ENCODE measurements at regions of chr11 and their contacts with region 1.

Region 1: DNA sequence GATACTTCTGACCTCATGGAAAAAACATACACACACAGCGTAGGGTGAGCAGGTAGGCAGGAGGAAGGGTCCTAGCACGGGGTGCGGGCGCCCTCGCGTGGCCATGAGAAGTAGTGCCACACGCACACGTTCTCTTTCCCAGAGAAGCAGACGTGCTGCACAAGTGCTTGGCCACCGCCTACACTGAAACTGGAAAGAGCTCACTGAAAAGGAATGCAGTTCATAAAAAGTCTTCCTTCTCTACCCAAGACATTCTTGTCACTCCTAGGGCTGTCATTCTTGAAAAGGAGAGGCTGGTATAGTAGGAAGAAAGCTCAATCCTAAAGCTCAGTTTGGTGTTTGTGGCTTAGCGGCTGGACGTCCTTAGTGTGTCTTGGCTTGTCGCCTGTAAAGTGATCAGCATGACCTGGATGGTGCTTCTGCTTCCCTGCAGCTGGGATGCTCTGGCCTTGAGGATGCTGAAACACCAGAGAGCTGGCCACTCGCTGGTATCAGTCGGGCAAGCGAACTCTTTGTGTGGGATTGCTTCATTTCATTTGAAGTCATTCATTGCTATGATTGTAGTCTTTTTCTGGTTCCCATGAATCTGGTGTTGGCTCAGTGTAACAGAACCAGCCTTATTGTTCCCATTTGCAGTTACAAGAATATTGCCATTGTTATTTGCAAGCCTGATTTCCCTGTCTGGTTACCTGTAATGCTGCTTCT is 303.8 kb downstream of the NTM start:
- DNase-seq: peak; percentile 93
- H3K4me3 ChIP-seq: no peak overlapping the region
- H3K27ac ChIP-seq: peak overlapping the region; percentile 18; the same call in 1 of the 2 replicates
- H3K4me1 ChIP-seq: peaks cover 21% of the 10 kb centered on the region
- H3K27me3 ChIP-seq: no peaks in the 10 kb centered on the region

Region 2: GRCh38 chr11:131064373-131064991 is 609.7 kb before region 1 on chr11:
- in situ Hi-C with region 1: loop called (anchors 5 kb)
- DNase-seq: peak; percentile 75
- H3K4me3 ChIP-seq: 0 out of 2 replicates have a peak overlapping the region, but pooled peaks have one; percentile 13
- H3K27ac ChIP-seq: no peak overlapping the region
- H3K4me1 ChIP-seq: peaks cover 6% of the 10 kb centered on the region; the same call in 1 of the 2 replicates
- H3K27me3 ChIP-seq: no peaks in the 10 kb centered on the region

Region 3: DNA sequence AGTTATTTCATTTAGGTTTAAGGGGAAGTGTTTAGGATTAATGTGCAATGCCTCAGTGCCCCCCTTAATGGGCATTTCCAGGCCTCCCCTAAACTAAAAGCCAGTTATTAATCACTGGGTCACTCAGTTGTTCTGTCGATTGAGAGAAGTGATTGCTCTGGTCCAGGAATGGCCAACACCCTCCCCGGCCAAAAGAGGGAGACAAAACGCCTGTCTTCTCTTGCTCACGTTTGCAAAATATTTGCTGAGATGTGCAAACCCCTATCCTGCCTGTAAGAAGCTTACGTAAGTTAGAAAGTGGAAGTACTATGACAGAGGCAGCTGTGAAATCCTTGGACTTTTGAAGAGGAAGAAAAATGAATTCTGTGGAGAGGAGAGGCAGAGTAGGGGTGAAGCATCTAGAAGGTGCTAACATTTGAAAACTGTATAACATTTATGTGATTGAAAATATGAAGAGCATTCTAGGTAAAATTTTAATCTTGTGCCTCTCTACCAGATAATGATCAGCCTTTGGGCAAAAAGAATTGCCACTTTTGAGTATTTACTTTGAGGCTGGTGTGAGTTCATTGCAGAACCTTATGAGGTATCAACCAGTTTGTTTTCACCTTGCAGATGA is 266.1 kb before region 1 on chr11:
- in situ Hi-C with region 1: loop called (anchors 25 kb)
- DNase-seq: peak; percentile 76
- H3K4me3 ChIP-seq: no peak overlapping the region
- H3K27ac ChIP-seq: no peak overlapping the region
- H3K4me1 ChIP-seq: no peaks in the 10 kb centered on the region
- H3K27me3 ChIP-seq: peaks cover 55% of the 10 kb centered on the region